ENCODE measurements at regions of chr22 and their contacts with region 1.

Region 1: GRCh38 chr22:31345331-31346254 is 553 bp downstream of the PATZ1 start:
- DNase-seq: peak; percentile 95
- ATAC-seq: peak; percentile 72

Region 2: DNA sequence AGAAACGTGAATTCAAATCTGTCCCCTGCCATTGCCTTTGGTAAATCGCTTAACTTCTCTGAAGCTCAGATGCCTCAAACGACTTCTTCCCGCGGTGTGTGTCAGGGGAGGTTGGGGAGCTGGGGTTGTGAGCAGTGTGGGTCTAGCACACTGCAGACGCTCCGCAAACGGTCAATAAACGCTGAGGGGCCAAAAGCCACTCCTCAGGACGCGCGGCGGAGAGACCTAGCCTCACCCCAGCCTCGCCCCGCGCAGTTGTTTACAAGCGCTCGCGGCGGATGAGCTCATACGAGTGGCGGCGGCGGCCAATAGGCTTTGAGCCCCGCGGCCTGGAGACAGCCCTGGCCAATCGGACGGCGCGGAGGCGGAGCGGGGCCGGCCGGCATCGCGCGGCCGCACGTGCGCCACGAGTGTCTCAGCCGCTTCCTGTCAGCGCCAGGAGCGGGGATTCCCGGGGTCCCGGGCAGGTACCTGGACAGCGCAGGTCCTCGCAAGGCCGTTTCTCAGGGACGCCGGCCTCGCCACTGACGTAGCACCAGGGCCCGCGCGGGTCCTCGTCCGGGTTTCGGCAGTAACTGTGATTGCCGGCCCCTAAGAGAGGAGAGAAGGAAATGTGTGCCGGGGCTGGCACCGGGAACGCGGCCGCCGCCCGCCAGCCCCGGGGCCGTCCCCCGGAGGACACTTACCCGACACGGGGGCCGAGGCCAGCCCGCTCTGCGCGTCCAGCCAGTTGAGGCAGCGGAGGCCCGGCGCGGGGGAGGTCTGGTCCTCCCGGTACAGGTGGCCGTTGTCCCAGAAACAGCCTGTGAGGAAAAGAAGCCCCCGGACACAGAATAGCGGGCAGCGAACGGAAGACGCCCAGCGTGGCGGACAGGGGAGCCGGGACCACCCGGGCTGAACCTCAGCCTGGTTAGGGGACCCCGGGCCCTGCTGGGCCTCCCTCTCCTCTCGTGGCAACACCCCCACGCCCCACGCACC is 54.8 kb before region 1 on chr22:
- intact Hi-C with region 1: loop called (anchors 5 kb)
- DNase-seq: peak; percentile 99
- ATAC-seq: peak; percentile 94

Region 3: GRCh38 chr22:31399211-31400028 is 53.8 kb after region 1 on chr22 and contains the start of gene DRG1:
- intact Hi-C with region 1: loop called (anchors 1 kb)
- DNase-seq: peak; percentile 98
- ATAC-seq: peak; percentile 100
- total RNA-seq, gene DRG1: 59.3 TPM

Region 4: DNA sequence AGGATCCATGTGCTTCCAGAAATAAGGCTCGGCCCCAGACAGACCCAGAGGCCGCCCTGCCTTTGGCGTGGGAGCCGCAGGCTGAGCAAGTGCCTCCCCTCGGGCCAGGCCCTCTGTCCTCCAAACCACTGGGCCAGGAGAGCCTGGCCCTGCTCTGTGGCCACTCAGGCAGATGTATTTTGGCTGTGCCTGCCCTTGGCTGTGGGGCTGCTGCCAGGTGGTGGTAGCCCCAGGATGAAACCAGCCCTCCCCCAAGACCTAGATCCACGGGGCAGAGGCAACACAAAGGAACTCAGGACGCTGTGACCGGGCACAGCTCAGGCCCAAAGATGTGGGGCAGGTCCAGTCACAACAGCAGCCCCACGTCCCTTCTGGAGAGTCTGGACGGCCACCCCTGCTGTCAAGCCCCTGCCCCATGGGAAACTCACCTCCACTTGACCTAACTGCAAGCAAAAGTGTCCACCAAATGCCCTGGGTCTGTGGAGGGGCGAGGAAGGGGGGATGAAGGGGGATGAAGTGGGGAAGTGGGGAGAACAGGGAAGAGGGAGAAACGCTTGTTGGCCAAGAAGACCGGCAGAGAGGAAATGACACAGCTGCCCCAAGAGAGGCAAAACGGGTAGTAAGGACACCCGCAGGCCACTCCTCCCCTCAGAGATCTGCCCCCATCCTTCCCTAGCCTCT is 292.5 kb after region 1 on chr22:
- intact Hi-C with region 1: no loop called
- DNase-seq: peak; percentile 67
- ATAC-seq: peak; percentile 61

Measured in Right ventricle myocardium inferior (tissue), 1 donor.